Ovary (tissue), 10 donors: ENCODE measurements at regions of chr16 and their contacts with region 1.

Region 1: GRCh38 chr16:13697568-13697967 is 222.4 kb upstream of the ERCC4 start:
- DNase-seq: no peak
- H3K4me3 ChIP-seq: no peak overlapping the region
- H3K27ac ChIP-seq: no peak overlapping the region
- H3K4me1 ChIP-seq: no peaks in the 10 kb centered on the region
- H3K27me3 ChIP-seq: no peaks in the 10 kb centered on the region
- CTCF ChIP-seq: no peak
- EP300 ChIP-seq: no peak
- POLR2A ChIP-seq: no peak

Region 2: GRCh38 chr16:13633391-13633861 is 64.1 kb before region 1 on chr16:
- intact Hi-C with region 1: loop called in 1 of 4 experiments (anchors 10 kb)
- DNase-seq: no peak
- H3K4me3 ChIP-seq: no peak overlapping the region
- H3K27ac ChIP-seq: no peak overlapping the region
- H3K4me1 ChIP-seq: no peaks in the 10 kb centered on the region
- H3K27me3 ChIP-seq: no peaks in the 10 kb centered on the region
- CTCF ChIP-seq: no peak
- EP300 ChIP-seq: no peak
- POLR2A ChIP-seq: no peak